ENCODE measurements at regions of chr21 and their contacts with region 1.

Region 1: DNA sequence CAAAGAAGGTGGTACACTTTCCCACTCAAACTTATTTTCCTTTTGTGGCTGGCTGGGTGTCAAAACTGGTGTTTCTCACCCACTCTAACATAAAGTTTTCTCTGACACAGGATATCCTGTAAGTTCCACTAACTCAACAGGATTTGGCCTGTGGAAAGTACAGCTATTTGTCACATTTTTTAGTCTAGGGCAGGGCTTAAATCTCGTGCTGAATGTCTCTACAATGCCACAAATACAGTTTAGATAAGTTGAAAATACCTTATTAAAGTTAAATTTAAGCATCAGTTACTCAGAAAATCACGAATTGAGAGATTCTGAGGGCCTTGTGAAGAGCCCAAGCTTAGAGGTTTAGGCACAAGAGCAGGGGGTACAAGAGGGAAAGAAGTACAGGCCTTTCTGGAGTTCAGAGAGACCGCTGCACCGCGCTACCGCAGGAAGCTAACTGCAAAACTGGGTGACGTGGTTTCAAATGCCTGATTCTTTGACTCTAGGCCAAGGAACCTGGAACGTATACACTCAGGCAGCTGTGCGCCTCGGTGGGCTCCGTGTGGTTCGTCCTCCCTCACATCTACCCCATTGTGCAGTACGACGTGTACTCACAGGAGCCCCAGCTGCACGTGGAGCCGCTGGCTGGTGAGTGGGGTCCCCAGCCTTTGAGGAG is 23.4 kb upstream of the PWP2 start:
- DNase-seq: peak; percentile 79
- H3K4me3 Mint-ChIP-seq: peak overlapping the region; percentile 76
- H3K27ac Mint-ChIP-seq: peak overlapping the region; percentile 99
- H3K4me1 Mint-ChIP-seq: peaks cover 96% of the 10 kb centered on the region
- H3K27me3 Mint-ChIP-seq: no peaks in the 10 kb centered on the region

Region 2: GRCh38 chr21:44057960-44058651 is 25.7 kb before region 1 on chr21:
- CTCF ChIA-PET with region 1: no interaction called
- POLR2A ChIA-PET with region 1: interaction called, 53 read pairs
- DNase-seq: peak; percentile 57
- H3K4me3 Mint-ChIP-seq: peak overlapping the region; percentile 77
- H3K27ac Mint-ChIP-seq: peak overlapping the region; percentile 90
- H3K4me1 Mint-ChIP-seq: peaks cover 45% of the 10 kb centered on the region
- H3K27me3 Mint-ChIP-seq: no peaks in the 10 kb centered on the region

Region 3: DNA sequence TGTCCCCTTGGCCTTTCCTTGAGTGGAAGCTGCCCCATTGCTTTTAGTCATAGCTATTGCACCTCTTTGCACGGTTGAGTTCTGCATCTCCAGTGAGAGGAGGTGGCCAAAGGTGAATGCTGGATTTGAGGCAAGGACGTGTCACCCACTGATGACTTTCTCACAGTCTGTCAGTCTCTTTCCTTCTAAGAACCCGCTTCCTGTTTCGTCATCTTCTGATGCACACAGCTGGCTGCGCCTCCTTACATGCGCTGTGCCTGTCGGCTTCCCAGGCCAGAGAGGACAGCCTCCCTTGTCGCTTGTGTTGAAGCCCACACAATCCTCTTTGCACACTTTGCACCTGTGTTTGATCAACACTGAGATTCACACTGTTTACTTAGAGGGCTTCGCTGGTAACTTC is 18.3 kb before region 1 on chr21:
- CTCF ChIA-PET with region 1: interaction called, 4 read pairs
- POLR2A ChIA-PET with region 1: interaction called, 53 read pairs
- DNase-seq: peak; percentile 81
- H3K4me3 Mint-ChIP-seq: peak overlapping the region; percentile 57
- H3K27ac Mint-ChIP-seq: peak overlapping the region; percentile 91
- H3K4me1 Mint-ChIP-seq: peaks cover 44% of the 10 kb centered on the region
- H3K27me3 Mint-ChIP-seq: no peaks in the 10 kb centered on the region

Measured in activated CD4-positive, alpha-beta memory T cell treated with anti-CD3 and anti-CD28 coated beads, Interleukin-2, amount 10 ng/mL, durations not matched to agents 7 days and 5 days (primary cell).